Activated B cell treated with CpG ODN at 0.5 μM for 24 hours (primary cell): ENCODE measurements at regions of chr17 and their contacts with region 1.

Region 1: DNA sequence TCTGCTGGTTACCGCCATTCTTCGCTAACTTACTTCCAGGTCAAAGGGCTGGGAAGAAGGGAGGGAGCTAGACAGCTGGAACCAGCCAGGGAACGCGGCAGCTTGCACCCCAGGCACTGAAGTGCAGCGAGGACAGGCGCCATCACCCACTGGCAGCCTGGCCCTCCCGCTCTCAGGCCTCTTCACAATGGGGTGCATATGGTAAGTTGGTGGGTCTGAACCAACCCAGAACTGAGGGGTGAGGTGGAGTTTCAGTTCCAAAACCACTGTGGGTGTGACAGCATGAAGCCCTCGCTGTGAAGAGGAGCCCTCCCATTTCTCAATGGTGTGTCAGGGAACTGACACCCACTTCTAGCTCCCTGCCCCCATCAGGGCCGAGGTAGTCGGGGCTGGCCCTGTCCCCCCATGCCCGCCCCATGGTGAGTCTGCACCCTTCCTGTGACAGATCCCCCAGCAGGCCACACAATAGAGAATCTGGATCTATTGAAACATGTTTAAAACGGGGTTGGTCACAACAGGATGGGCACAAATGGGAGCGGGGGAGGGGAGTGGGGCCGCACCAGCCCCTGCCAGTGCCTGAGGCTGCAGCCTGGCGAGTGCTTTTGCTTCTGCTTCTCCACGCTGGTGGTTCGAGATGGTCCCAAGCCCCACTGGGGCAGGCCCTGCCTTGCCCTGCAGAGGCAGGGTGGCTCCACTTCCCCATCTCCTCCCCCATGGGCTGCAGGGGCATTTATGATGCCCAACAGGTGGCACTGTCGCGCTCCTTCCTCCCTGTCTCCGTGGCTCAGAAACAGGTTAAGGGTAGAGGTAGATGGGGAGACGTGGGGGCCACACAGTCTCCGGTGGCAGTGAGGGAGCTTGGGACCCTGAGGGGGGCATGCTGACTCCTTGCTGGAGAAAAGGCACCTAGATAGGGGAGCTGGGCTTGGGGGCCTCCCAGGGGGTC is 2.3 kb downstream of the LIMD2 start:
- DNase-seq: peak; percentile 78
- ATAC-seq: peak; percentile 52
- H3K4me3 Mint-ChIP-seq: peak overlapping the region; percentile 96
- H3K27ac Mint-ChIP-seq: peak overlapping the region; percentile 97
- H3K4me1 Mint-ChIP-seq: peaks cover 70% of the 10 kb centered on the region
- H3K27me3 Mint-ChIP-seq: no peaks in the 10 kb centered on the region
- CTCF ChIP-seq: no peak

Region 2: DNA sequence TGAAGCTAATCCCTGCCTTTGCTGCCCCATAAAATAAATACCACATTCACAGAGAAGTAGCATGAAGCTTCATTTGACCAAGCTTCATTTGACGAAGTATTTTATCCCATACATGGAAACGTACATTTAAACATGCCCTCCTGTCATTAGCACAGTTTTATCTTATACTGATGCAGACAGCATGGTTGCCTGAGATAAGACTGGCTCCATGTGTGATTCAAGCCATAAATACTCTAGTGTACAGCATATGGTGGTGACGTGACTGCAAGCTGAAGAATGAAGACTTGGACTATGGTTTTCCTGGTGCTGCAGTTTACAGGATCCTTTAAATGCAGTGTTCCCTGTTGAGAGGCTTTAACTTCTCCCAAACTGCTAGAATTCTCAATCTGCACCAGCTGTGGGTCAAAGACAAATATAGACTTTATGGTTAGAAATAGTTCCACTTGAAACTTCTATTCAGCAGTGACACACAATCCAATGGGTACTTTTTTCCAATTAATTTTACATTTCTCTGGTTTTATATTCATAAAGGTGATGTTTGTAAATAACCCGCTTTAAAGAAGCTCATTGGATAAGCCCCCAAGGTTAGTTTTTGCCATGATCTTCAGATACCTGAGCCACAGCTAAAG is 316.4 kb before region 1 on chr17:
- CTCF ChIA-PET with region 1: no interaction called
- POLR2A ChIA-PET with region 1: no interaction called
- intact Hi-C with region 1: no loop called
- DNase-seq: no peak
- ATAC-seq: no peak
- H3K4me3 Mint-ChIP-seq: no peak overlapping the region
- H3K27ac Mint-ChIP-seq: no peak overlapping the region
- H3K4me1 Mint-ChIP-seq: no peaks in the 10 kb centered on the region
- H3K27me3 Mint-ChIP-seq: no peaks in the 10 kb centered on the region
- CTCF ChIP-seq: no peak

Region 3: DNA sequence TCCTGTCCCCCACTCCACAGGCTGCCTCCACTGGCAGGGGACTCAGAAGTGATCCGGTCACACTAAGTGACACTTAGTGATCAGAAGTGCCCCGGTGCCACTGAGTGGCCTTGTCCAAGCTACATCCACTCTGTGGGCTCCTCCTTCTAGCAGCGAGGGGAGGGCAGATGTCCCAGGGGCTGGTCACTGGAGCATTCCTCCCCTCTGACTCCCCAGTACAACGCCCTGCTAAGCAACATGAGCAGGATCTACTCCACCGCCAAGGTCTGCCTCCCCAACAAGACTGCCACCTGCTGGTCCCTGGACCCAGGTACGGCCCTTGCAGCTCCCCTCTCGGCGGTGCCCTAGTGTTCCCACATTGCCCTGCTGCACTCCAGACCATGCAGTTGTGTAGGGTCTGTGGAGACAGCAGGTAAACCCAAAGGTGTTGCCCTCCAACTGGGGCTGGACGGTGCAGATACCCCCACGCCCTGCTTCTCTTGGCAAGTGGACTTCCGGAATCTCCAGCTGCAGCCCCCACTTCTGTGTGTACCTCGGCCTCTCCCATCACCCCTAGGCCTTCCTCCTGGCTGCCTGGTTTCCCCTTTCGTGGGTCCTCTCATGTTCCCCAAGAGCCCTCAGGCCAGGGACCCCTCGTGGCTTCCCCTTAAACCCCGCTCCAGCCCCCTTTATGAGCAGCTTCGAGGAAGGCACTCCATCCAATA is 218.7 kb before region 1 on chr17:
- CTCF ChIA-PET with region 1: interaction called, 3 read pairs
- POLR2A ChIA-PET with region 1: no interaction called
- intact Hi-C with region 1: loop called (anchors 5 kb)
- DNase-seq: peak; percentile 59
- ATAC-seq: peak; percentile 80
- H3K4me3 Mint-ChIP-seq: peak overlapping the region; percentile 54
- H3K27ac Mint-ChIP-seq: no peak overlapping the region
- H3K4me1 Mint-ChIP-seq: peaks cover 17% of the 10 kb centered on the region
- H3K27me3 Mint-ChIP-seq: peaks cover 32% of the 10 kb centered on the region
- CTCF ChIP-seq: no peak

Region 4: GRCh38 chr17:63646488-63646806 is 51.2 kb before region 1 on chr17:
- CTCF ChIA-PET with region 1: no interaction called
- POLR2A ChIA-PET with region 1: interaction called, 16 read pairs
- intact Hi-C with region 1: no loop called
- DNase-seq: no peak
- ATAC-seq: peak; percentile 82
- H3K4me3 Mint-ChIP-seq: peak overlapping the region; percentile 3
- H3K27ac Mint-ChIP-seq: peak overlapping the region; percentile 90
- H3K4me1 Mint-ChIP-seq: peaks cover 46% of the 10 kb centered on the region
- H3K27me3 Mint-ChIP-seq: no peaks in the 10 kb centered on the region
- CTCF ChIP-seq: no peak

Region 5: DNA sequence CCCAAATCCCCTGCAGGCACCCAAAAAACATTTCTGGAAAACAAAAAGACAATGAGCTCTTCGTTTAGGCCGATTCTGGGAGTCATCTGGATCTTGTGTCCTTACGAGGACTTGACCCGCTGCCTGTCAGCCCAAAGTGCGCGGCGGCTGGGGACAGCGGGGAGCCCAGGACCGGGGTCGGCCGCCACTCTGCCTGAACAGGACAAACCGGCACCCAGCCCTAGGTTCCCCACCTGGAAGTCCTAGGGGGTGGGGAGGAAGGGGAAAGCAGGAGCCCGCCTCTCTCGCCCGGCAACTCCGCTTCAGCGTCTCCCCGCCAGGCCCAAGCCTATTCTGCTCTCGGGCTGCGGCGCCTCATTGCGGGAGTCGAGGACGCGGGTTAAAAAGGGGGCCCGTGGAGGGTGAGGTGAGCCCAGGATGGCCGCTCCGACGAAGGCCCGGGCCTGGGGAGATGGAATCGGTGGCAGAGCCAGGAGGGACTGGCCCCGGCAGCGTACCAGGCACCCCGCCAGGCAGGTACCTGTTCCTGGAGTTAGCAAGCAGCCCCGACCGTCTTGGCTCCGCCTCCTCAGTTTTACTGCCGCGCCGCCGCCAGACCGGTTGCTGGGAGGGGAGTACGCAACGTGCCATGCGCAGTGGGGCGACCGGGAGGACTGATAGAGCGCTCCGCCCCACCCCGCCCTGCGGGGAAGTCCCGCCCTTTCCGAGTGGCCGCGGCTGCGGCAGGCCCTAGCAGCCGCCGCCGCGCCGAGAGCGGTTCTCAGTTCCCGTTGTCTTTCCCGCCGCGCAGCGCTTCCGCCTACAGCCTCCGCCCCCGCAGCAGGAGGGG is 43.8 kb after region 1 on chr17 and contains the start of gene STRADA:
- CTCF ChIA-PET with region 1: interaction called, 7 read pairs
- POLR2A ChIA-PET with region 1: interaction called, 295 read pairs
- intact Hi-C with region 1: loop called (anchors 1 kb)
- DNase-seq: peak; percentile 99
- ATAC-seq: peak; percentile 86
- H3K4me3 Mint-ChIP-seq: peak within 1 kb of the TSS; percentile 86
- H3K27ac Mint-ChIP-seq: peak within 1 kb of the TSS; percentile 96
- H3K4me1 Mint-ChIP-seq: peaks cover 28% of the 10 kb centered on the region
- H3K27me3 Mint-ChIP-seq: no peaks in the 10 kb centered on the region
- CTCF ChIP-seq: no peak
- total RNA-seq, gene STRADA: 72.5 and 80.2 TPM in 2 replicates

Region 6: DNA sequence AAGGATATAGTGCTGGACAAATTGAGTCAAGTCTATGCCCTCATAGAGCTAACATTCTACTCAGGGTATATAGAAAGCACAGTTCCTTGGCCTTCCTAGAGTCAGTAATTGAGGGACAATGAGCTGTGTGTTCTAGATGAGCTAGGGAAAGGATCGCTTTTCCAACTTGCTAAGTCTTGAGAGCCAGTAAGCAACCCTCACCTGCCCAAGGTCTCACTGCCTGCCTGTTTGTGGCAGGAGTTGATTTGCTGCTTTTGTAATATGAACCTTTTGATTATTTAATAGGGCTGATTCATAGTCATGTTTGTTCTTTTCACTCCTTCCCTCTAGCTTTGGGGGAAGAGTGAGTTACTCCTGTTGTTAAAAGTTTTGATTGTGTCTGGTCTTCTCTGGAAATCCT is 82.9 kb after region 1 on chr17:
- CTCF ChIA-PET with region 1: no interaction called
- POLR2A ChIA-PET with region 1: interaction called, 247 read pairs
- intact Hi-C with region 1: no loop called
- DNase-seq: no peak
- ATAC-seq: no peak
- H3K4me3 Mint-ChIP-seq: no peak overlapping the region
- H3K27ac Mint-ChIP-seq: no peak overlapping the region
- H3K4me1 Mint-ChIP-seq: peaks cover 57% of the 10 kb centered on the region
- H3K27me3 Mint-ChIP-seq: no peaks in the 10 kb centered on the region
- CTCF ChIP-seq: no peak

Region 7: GRCh38 chr17:64213995-64214811 is 516.6 kb after region 1 on chr17:
- CTCF ChIA-PET with region 1: no interaction called
- POLR2A ChIA-PET with region 1: no interaction called
- intact Hi-C with region 1: no loop called
- DNase-seq: no peak
- ATAC-seq: no peak
- H3K4me3 Mint-ChIP-seq: no peak overlapping the region
- H3K27ac Mint-ChIP-seq: no peak overlapping the region
- H3K4me1 Mint-ChIP-seq: peaks cover 31% of the 10 kb centered on the region
- H3K27me3 Mint-ChIP-seq: no peaks in the 10 kb centered on the region
- CTCF ChIP-seq: no peak

Region 8: GRCh38 chr17:64262417-64263260 is 565.0 kb after region 1 on chr17 and contains the start of gene TEX2:
- CTCF ChIA-PET with region 1: no interaction called
- POLR2A ChIA-PET with region 1: no interaction called
- intact Hi-C with region 1: loop called (anchors 5 kb)
- DNase-seq: peak; percentile 43
- ATAC-seq: peak; percentile 25
- H3K4me3 Mint-ChIP-seq: peak within 1 kb of the TSS; percentile 88
- H3K27ac Mint-ChIP-seq: peak within 1 kb of the TSS; percentile 80
- H3K4me1 Mint-ChIP-seq: peaks cover 19% of the 10 kb centered on the region
- H3K27me3 Mint-ChIP-seq: peaks cover 10% of the 10 kb centered on the region
- CTCF ChIP-seq: no peak
- total RNA-seq, gene TEX2: 8.1 TPM in 2 replicates